ENCODE measurements at regions of chr22 and their contacts with region 1.

Region 1: DNA sequence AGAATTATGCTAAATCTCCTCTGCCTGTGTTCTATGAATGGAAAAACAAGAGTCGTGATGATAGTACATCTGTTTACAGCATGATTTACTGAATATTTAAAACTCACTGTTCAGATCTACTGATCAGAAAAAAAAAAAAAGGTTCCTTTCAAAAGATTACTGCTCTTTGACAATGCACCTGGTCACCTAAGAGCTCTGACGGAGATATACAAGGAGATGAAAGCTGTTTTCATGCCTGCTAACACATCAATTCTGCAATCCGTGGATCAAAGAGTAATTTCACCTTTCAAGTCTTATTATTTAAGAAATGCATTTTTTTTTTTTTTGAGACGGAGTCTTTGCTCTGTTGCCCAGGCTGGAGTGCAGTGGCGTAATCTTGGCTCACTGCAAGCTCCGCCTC is 30.7 kb downstream of the CLTCL1 start:
- DNase-seq: no peak
- ATAC-seq: no peak
- H3K4me3 ChIP-seq: no peak overlapping the region
- H3K27ac ChIP-seq: no peak overlapping the region
- H3K4me1 ChIP-seq: peaks cover 0 to 9% of the 10 kb centered on the region in 2 experiments; a peak in 1 of 5 replicates
- H3K27me3 ChIP-seq: no peaks in the 10 kb centered on the region
- CTCF ChIP-seq: no peak
- EP300 ChIP-seq: no peak
- POLR2A ChIP-seq: no peak
- RAD21 ChIP-seq: no peak

Region 2: GRCh38 chr22:19275919-19276600 is 15.3 kb after region 1 on chr22:
- CTCF ChIA-PET with region 1: no interaction called
- POLR2A ChIA-PET with region 1: interaction called, 20 read pairs
- in situ Hi-C with region 1: no loop called
- intact Hi-C with region 1: no loop called
- DNase-seq: peak; percentile 70 to 79 (median 75)
- ATAC-seq: peak; percentile 77
- H3K4me3 ChIP-seq: no peak overlapping the region
- H3K27ac ChIP-seq: no peak overlapping the region
- H3K4me1 ChIP-seq: peaks cover 7 to 12% of the 10 kb centered on the region in 2 experiments
- H3K27me3 ChIP-seq: peaks cover 8 to 17% of the 10 kb centered on the region in 2 experiments; a peak in 3 of 5 replicates
- CTCF ChIP-seq: no peak
- EP300 ChIP-seq: peak; percentile 20; the same call in 1 of the 2 replicates
- POLR2A ChIP-seq: no peak
- RAD21 ChIP-seq: no peak

Region 3: DNA sequence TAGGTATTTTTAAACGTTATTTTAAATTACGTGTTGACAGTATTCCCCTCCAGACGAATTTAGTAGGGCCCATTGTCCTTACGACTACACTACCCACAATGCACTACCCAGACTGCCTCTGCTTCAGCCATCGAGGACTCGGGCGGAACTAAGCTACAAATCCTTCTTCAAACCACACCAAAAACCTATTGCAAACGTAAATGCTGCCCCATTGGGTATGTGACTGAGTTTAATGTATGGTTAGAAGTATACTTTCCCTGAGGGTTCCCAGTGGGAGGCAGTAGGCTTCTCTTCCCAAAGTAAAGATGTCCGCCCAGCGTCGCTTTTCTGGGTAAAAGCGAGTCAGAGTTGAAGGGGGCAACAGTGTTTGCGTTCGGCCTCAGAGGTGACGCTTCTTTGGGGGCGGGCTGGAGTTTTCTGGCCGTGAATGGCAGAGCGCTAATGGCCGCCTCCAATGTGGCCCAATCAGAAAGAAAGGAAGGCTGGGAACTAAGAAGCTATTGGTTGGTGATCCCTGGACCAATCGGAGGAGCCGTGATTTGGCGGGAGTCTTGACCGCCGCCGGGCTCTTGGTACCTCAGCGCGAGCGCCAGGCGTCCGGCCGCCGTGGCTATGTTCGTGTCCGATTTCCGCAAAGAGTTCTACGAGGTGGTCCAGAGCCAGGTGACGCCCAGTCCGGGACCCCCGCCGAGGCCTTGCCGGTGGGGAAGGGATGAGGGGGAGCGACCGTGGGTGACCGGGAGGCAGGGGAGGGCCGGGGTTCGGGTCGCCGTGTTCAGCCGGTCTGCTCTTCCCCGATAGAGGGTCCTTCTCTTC is 218.8 kb after region 1 on chr22 and contains the start of gene CDC45:
- CTCF ChIA-PET with region 1: no interaction called
- POLR2A ChIA-PET with region 1: no interaction called
- in situ Hi-C with region 1: no loop called
- intact Hi-C with region 1: no loop called
- DNase-seq: peak; percentile 100
- ATAC-seq: peak; percentile 93
- H3K4me3 ChIP-seq: peak within 1 kb of the TSS; percentile 70
- H3K27ac ChIP-seq: peak within 1 kb of the TSS; percentile 97
- H3K4me1 ChIP-seq: peaks cover 7 to 16% of the 10 kb centered on the region in 2 experiments
- H3K27me3 ChIP-seq: no peaks in the 10 kb centered on the region
- CTCF ChIP-seq: 0 out of 6 replicates have a peak, but pooled peaks of 2 of the 3 experiments have one; percentile 9 to 11
- EP300 ChIP-seq: peak; percentile 35
- POLR2A ChIP-seq: no peak
- RAD21 ChIP-seq: peak in 1 of 2 experiments; percentile 42; a peak in 2 of 4 replicates
- polyA plus RNA-seq, gene CDC45: 276 to 465 TPM

Measured in K562 (cell line).